ENCODE measurements at regions of chr22 and their contacts with region 1.

Region 1: GRCh38 chr22:39496131-39496838 is 5.8 kb upstream of the MIEF1 start:
- DNase-seq: peak; percentile 59
- CTCF ChIP-seq: peak; percentile 71

Region 2: GRCh38 chr22:39463901-39464390 is 32.3 kb before region 1 on chr22:
- CTCF ChIA-PET with region 1: interaction called, 12 read pairs
- POLR2A ChIA-PET with region 1: no interaction called
- DNase-seq: no peak
- CTCF ChIP-seq: no peak

Region 3: GRCh38 chr22:39623603-39624500 is 127.6 kb after region 1 on chr22:
- CTCF ChIA-PET with region 1: no interaction called
- POLR2A ChIA-PET with region 1: no interaction called
- DNase-seq: no peak
- CTCF ChIP-seq: no peak